Activated naive CD8-positive, alpha-beta T cell treated with anti-CD3 and anti-CD28 coated beads, Interleukin-2, amount 10 ng/mL, durations not matched to agents 7 days and 5 days (primary cell): ENCODE measurements at regions of chr11 and their contacts with region 1.

Region 1: GRCh38 chr11:10808553-10809372 is at the start of gene EIF4G2:
- DNase-seq: peak; percentile 98
- ATAC-seq: peak; percentile 91
- H3K4me3 Mint-ChIP-seq: peak within 1 kb of the TSS; percentile 96
- H3K27ac Mint-ChIP-seq: peak within 1 kb of the TSS; percentile 98
- H3K4me1 Mint-ChIP-seq: peaks cover 29% of the 10 kb centered on the region
- H3K27me3 Mint-ChIP-seq: peaks cover 3% of the 10 kb centered on the region
- total RNA-seq, gene EIF4G2: 586 to 630 TPM

Region 2: DNA sequence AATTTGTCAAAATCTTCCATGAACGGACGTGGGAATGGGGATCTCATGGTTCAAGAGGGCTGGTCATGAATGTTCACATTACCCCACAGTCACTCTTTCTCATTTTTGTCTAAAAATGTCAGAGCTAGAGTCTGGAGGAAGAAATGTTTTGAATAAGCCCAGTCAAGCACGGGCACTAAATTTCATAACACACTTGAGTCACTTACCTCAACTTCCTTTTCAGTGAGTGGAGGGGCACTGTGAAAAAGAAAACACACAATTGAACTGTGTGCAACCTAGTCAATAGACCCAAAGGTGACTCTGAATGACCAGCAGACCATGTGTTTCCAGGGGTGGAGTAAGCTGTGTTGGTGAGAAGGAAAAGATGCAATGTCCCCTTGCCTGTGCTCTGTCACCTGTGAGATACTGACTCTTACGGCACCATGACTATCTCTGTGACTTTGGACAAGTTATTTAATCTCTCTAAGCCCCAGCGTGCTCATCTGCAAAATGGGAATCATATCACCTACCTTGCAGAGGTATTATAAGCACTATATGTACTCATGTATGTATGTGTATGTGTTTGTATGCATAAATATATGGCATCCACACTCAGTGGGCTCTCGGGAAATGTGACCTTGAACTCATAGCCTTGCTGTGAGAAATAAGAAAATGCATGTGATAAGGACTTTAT is 202.1 kb before region 1 on chr11:
- POLR2A ChIA-PET with region 1: no interaction called
- DNase-seq: no peak
- ATAC-seq: no peak
- H3K4me3 Mint-ChIP-seq: no peak overlapping the region
- H3K27ac Mint-ChIP-seq: no peak overlapping the region
- H3K4me1 Mint-ChIP-seq: peaks cover 10% of the 10 kb centered on the region
- H3K27me3 Mint-ChIP-seq: peaks cover 27% of the 10 kb centered on the region

Region 3: GRCh38 chr11:10693509-10694081 is 115.2 kb before region 1 on chr11 and contains the start of gene IRAG1:
- POLR2A ChIA-PET with region 1: no interaction called
- DNase-seq: no peak
- ATAC-seq: no peak
- H3K4me3 Mint-ChIP-seq: no peak within 1 kb of the TSS
- H3K27ac Mint-ChIP-seq: no peak within 1 kb of the TSS
- H3K4me1 Mint-ChIP-seq: peaks cover 3% of the 10 kb centered on the region
- H3K27me3 Mint-ChIP-seq: peaks cover 27% of the 10 kb centered on the region
- total RNA-seq, gene IRAG1: not detected

Region 4: DNA sequence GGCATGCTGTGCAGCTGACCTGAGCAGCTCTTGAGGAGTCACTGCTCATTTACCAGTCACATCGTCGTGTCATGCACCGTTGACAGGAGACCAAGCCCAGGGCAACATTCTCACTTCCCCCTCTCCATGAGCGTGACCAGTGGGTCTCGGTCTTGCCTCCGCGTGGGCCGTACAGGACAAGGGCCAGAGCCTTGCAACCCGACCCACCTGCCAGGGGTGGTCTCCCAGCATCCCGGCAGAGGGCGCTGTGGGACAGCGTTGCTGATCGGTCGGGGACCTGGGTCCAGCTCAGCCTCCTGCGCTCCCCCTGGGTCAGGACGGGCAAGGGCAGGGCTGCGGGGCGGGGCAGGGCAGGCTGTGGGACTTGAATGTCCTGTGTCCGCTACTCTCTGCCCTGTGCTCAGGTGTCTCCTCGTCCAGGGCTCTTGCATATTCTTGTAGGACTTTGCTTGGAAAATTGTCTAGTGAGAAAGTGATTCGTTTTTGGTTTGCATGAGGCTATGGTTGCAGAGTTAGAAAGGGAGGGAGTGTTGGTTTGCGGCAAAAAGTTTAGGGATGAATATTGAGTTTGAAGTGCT is 16.3 kb before region 1 on chr11:
- POLR2A ChIA-PET with region 1: interaction called, 46 read pairs
- DNase-seq: peak; percentile 92
- ATAC-seq: peak; percentile 92
- H3K4me3 Mint-ChIP-seq: peak overlapping the region; percentile 68
- H3K27ac Mint-ChIP-seq: peak overlapping the region; percentile 46
- H3K4me1 Mint-ChIP-seq: peaks cover 21% of the 10 kb centered on the region
- H3K27me3 Mint-ChIP-seq: peaks cover 12% of the 10 kb centered on the region

Region 5: DNA sequence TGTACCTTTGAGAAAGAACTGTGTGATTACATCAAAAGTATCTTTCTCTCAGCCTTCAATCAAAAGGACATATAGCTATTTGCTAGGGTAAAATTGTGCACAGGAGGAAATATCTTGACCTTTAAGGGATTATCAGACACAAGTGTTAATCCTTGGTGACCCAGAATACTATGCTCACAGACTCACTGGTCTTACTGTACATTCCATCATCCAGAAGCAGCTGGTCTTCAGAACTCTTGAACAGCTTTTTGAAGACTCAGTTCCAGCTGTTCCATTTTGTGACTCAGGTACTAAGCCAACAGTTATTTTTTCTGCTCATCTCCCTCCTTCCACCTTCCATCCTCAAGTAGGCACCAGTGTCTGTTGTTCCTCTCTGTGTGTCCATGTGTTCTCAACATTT is 29.3 kb after region 1 on chr11:
- POLR2A ChIA-PET with region 1: interaction called, 16 read pairs
- DNase-seq: no peak
- ATAC-seq: no peak
- H3K4me3 Mint-ChIP-seq: no peak overlapping the region
- H3K27ac Mint-ChIP-seq: no peak overlapping the region
- H3K4me1 Mint-ChIP-seq: no peaks in the 10 kb centered on the region
- H3K27me3 Mint-ChIP-seq: no peaks in the 10 kb centered on the region

Region 6: GRCh38 chr11:10857709-10858438 is 49.1 kb after region 1 on chr11 and contains the start of gene ZBED5:
- POLR2A ChIA-PET with region 1: interaction called, 235 read pairs
- DNase-seq: peak; percentile 97
- ATAC-seq: peak; percentile 90
- H3K4me3 Mint-ChIP-seq: peak within 1 kb of the TSS; percentile 100
- H3K27ac Mint-ChIP-seq: peak within 1 kb of the TSS; percentile 100
- H3K4me1 Mint-ChIP-seq: peaks cover 22% of the 10 kb centered on the region
- H3K27me3 Mint-ChIP-seq: no peaks in the 10 kb centered on the region
- total RNA-seq, gene ZBED5: 69.7 to 72.0 TPM